HCT116 (cell line): ENCODE measurements at regions of chr1 and their contacts with region 1.

Region 1: DNA sequence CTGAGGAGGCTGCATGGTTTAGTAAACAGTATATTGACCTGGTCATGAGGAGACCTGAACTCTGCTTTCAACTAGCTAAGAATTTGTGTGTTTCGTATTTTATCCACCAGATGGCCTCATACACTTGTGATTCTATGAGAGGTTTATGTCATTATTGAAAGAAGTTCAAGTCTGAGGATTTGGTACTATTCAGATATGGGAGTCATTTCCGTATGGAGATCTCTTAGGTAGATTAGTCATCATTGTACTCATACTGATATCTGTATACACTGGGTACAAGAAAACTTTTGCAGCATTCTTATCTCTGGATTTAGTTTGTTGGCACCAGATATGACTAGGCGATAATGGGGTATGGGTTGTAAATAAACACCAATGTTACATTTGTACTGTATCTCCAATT is 26.6 kb downstream of the ATF6 start:
- DNase-seq: peak; percentile 49
- ATAC-seq: peak; percentile 86
- H3K4me3 ChIP-seq: no peak overlapping the region
- H3K27ac ChIP-seq: no peak overlapping the region
- H3K4me1 ChIP-seq: peaks cover 0 to 4% of the 10 kb centered on the region in 2 experiments; a peak in 2 of 4 replicates
- H3K27me3 ChIP-seq: no peaks in the 10 kb centered on the region
- CTCF ChIP-seq: peak; percentile 45 to 80 (median 65)
- POLR2A ChIP-seq: no peak
- RAD21 ChIP-seq: peak; percentile 81

Region 2: DNA sequence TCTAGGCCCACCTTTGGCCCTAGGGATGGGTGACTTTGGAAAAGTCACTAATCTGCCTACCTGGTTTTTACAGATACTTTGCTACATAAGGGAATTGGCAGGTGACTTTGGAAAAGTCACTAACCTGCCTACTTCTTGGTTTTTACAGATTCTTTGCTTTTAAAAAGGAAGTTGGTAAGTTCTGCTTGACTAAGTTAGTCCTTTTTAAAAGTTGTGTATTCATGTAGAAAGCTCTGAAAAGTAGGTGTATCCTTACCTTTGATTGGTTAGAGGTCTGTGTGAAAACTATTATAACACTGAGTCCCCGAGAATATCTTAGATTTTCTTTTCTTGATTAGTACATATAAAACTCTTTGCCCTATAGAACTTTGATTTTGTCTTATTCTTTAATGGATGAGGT is 14.2 kb before region 1 on chr1:
- CTCF ChIA-PET with region 1: interaction called, 9 read pairs
- POLR2A ChIA-PET with region 1: no interaction called
- RAD21 ChIA-PET with region 1: no interaction called
- intact Hi-C with region 1: loop called (anchors 1 kb)
- DNase-seq: no peak
- ATAC-seq: no peak
- H3K4me3 ChIP-seq: no peak overlapping the region
- H3K27ac ChIP-seq: no peak overlapping the region
- H3K4me1 ChIP-seq: no peaks in the 10 kb centered on the region
- H3K27me3 ChIP-seq: no peaks in the 10 kb centered on the region
- CTCF ChIP-seq: no peak
- POLR2A ChIP-seq: no peak
- RAD21 ChIP-seq: no peak

Region 3: DNA sequence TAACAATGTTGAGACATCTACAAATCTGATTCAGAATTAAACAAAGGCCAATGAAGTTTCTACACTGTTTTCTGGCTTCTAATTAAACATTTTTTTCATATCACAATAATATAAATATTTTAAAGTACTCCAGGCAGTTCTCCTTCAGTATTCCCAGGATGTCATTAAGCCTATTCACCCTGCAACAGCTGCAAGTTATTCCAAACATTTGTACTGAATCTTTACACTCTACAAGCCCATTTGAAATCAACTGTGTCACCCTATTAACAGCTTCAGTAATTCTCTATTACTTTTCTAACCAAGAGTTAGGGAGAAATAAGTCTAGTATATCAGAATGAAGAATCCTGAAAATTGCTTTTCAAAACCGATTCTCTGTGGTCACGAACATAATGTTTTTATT is 106.4 kb after region 1 on chr1:
- CTCF ChIA-PET with region 1: no interaction called
- POLR2A ChIA-PET with region 1: no interaction called
- RAD21 ChIA-PET with region 1: no interaction called
- intact Hi-C with region 1: no loop called
- DNase-seq: no peak
- ATAC-seq: no peak
- H3K4me3 ChIP-seq: no peak overlapping the region
- H3K27ac ChIP-seq: no peak overlapping the region
- H3K4me1 ChIP-seq: peaks cover 3 to 7% of the 10 kb centered on the region in 2 experiments; a peak in 2 of 4 replicates
- H3K27me3 ChIP-seq: no peaks in the 10 kb centered on the region
- CTCF ChIP-seq: no peak
- POLR2A ChIP-seq: no peak
- RAD21 ChIP-seq: no peak

Region 4: GRCh38 chr1:161933592-161934588 is 141.2 kb after region 1 on chr1:
- CTCF ChIA-PET with region 1: no interaction called
- POLR2A ChIA-PET with region 1: no interaction called
- RAD21 ChIA-PET with region 1: no interaction called
- intact Hi-C with region 1: no loop called
- DNase-seq: no peak
- ATAC-seq: no peak
- H3K4me3 ChIP-seq: no peak overlapping the region
- H3K27ac ChIP-seq: no peak overlapping the region
- H3K4me1 ChIP-seq: no peaks in the 10 kb centered on the region
- H3K27me3 ChIP-seq: no peaks in the 10 kb centered on the region
- CTCF ChIP-seq: no peak
- POLR2A ChIP-seq: no peak
- RAD21 ChIP-seq: no peak

Region 5: GRCh38 chr1:162023547-162024501 is 231.1 kb after region 1 on chr1 and contains the start of gene OLFML2B:
- CTCF ChIA-PET with region 1: interaction called, 25 read pairs
- POLR2A ChIA-PET with region 1: no interaction called
- RAD21 ChIA-PET with region 1: interaction called, 4 read pairs
- intact Hi-C with region 1: no loop called
- DNase-seq: peak; percentile 38
- ATAC-seq: peak; percentile 96
- H3K4me3 ChIP-seq: peak within 1 kb of the TSS; percentile 70 to 82
- H3K27ac ChIP-seq: no peak within 1 kb of the TSS; the same call in 1 of the 2 replicates
- H3K4me1 ChIP-seq: peaks cover 9 to 17% of the 10 kb centered on the region in 2 experiments
- H3K27me3 ChIP-seq: no peaks in the 10 kb centered on the region
- CTCF ChIP-seq: peak in 2 of 3 experiments; percentile 17 to 21; a peak in 3 of 6 replicates
- POLR2A ChIP-seq: no peak
- RAD21 ChIP-seq: peak; percentile 59
- total RNA-seq, gene OLFML2B: 1.3 TPM

Region 6: DNA sequence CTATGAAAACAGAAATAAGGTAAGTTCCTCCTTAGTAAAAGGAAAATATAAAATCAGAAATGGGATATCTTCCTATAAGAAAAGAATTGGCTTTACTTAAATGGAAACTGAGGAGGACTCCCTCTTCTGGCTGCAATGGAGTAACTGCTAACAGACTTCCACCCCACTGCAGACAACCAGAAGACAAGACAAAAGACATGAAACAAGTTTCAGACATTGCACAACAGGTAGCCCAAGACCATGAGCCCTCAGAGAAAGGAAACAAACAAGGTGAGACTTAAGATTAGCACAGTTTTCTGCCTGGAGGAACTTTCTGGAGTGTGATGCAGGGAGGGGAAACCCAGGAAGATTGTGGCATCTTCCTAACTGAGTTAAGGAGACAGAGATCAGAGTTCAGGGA is 247.9 kb after region 1 on chr1:
- CTCF ChIA-PET with region 1: interaction called, 295 read pairs
- POLR2A ChIA-PET with region 1: interaction called, 13 read pairs
- RAD21 ChIA-PET with region 1: interaction called, 28 to 39 read pairs
- intact Hi-C with region 1: loop called (anchors 1 kb)
- DNase-seq: peak; percentile 34
- ATAC-seq: peak; percentile 68
- H3K4me3 ChIP-seq: no peak overlapping the region
- H3K27ac ChIP-seq: no peak overlapping the region
- H3K4me1 ChIP-seq: peaks cover 6 to 16% of the 10 kb centered on the region in 2 experiments
- H3K27me3 ChIP-seq: no peaks in the 10 kb centered on the region
- CTCF ChIP-seq: peak; percentile 50 to 72 (median 67); a peak in 5 of 6 replicates
- POLR2A ChIP-seq: no peak
- RAD21 ChIP-seq: peak; percentile 39

Region 7: DNA sequence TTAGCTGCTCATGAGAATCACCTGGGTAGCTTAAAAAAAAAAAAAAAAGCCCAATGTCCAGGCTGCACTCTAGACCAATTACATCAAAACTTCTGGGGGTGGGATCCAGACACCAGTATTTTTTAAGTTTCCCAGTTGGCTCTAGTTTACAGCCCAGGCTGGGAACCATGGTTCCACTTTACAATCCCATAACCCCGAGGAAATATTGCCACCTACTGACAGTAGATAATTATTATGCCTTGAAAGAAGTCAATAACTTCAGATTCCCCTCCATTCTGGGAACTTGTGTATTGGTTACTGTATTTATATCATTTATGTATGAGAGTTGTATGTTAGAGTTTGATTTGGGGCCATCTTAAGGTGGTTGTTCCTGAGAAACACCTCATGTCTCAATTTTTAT is 483.8 kb after region 1 on chr1:
- CTCF ChIA-PET with region 1: no interaction called
- POLR2A ChIA-PET with region 1: no interaction called
- RAD21 ChIA-PET with region 1: no interaction called
- intact Hi-C with region 1: loop called (anchors 10 kb)
- DNase-seq: peak; percentile 26
- ATAC-seq: peak; percentile 79
- H3K4me3 ChIP-seq: no peak overlapping the region
- H3K27ac ChIP-seq: no peak overlapping the region
- H3K4me1 ChIP-seq: no peaks in the 10 kb centered on the region
- H3K27me3 ChIP-seq: no peaks in the 10 kb centered on the region
- CTCF ChIP-seq: peak; percentile 30 to 82 (median 61)
- POLR2A ChIP-seq: no peak
- RAD21 ChIP-seq: peak; percentile 92